ENCODE measurements at regions of chr4 and their contacts with region 1.

Region 1: DNA sequence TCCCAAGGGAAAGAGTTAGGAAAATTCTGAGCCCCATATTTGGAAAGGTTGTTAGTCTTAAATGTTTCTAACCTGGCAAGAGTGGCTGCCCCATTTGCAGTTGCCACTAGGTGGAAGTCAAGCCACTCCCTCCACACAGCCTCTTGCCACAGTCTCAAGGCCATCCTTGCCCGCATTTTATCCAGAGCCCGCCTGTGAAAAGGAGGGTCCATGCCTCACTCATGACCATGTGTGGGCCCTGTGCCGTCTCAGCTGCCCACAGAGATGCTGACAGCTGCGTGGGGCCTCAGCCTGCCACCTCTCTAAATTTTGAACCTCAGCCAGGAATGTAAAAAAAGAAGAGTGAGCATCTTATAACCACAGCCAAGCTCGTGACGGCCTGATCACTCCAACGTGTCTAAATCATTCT is 201.5 kb upstream of the FAM241A start:
- DNase-seq: no peak
- ATAC-seq: peak; percentile 99
- H3K4me3 ChIP-seq: no peak overlapping the region
- H3K27ac ChIP-seq: no peak overlapping the region
- H3K4me1 ChIP-seq: no peaks in the 10 kb centered on the region
- H3K27me3 ChIP-seq: no peaks in the 10 kb centered on the region; a peak in 1 of 4 replicates
- CTCF ChIP-seq: peak; percentile 60 to 83 (median 70)
- EP300 ChIP-seq: no peak
- POLR2A ChIP-seq: no peak
- RAD21 ChIP-seq: peak; percentile 48

Region 2: GRCh38 chr4:111641955-111642579 is 301.7 kb before region 1 on chr4:
- CTCF ChIA-PET with region 1: interaction called, 13 read pairs
- POLR2A ChIA-PET with region 1: no interaction called
- RAD21 ChIA-PET with region 1: no interaction called
- SMC1A ChIA-PET with region 1: interaction called, 6 read pairs
- in situ Hi-C with region 1: loop called (anchors 5 kb)
- intact Hi-C with region 1: no loop called
- DNase-seq: peak; percentile 13
- ATAC-seq: peak; percentile 98
- H3K4me3 ChIP-seq: no peak overlapping the region
- H3K27ac ChIP-seq: no peak overlapping the region
- H3K4me1 ChIP-seq: no peaks in the 10 kb centered on the region
- H3K27me3 ChIP-seq: no peaks in the 10 kb centered on the region; a peak in 1 of 4 replicates
- CTCF ChIP-seq: peak; percentile 80 to 97 (median 83)
- EP300 ChIP-seq: no peak
- POLR2A ChIP-seq: no peak
- RAD21 ChIP-seq: peak; percentile 74

Region 3: GRCh38 chr4:111960241-111960667 is 16.5 kb after region 1 on chr4:
- CTCF ChIA-PET with region 1: interaction called, 69 read pairs
- POLR2A ChIA-PET with region 1: interaction called, 4 read pairs
- RAD21 ChIA-PET with region 1: interaction called, 34 read pairs
- SMC1A ChIA-PET with region 1: interaction called, 90 read pairs
- in situ Hi-C with region 1: no loop called
- intact Hi-C with region 1: no loop called
- DNase-seq: peak; percentile 82
- ATAC-seq: peak; percentile 93
- H3K4me3 ChIP-seq: no peak overlapping the region
- H3K27ac ChIP-seq: no peak overlapping the region
- H3K4me1 ChIP-seq: no peaks in the 10 kb centered on the region
- H3K27me3 ChIP-seq: no peaks in the 10 kb centered on the region
- CTCF ChIP-seq: no peak
- EP300 ChIP-seq: peak; percentile 14 to 89; a peak in 3 of 4 replicates
- POLR2A ChIP-seq: no peak
- RAD21 ChIP-seq: no peak

Region 4: DNA sequence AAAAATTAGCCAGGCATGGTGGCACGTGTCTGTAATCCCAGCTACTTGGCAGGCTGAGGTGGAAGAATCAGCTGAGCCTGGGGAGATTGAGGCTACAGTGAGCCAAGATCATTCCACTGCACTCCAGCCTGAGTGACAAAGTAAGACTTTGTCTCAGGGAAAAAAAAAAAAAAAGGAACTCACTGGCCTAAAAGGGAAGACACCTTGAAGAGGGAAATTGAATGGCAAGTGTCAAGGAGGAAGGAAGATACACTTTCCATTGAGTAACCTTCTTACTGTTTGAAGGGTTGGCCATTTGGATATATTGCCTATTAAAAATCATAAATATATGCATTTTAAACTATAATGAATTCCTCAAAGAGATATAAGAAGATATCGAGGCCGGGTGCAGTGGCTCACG is 54.0 kb after region 1 on chr4:
- CTCF ChIA-PET with region 1: interaction called, 29 read pairs
- POLR2A ChIA-PET with region 1: no interaction called
- RAD21 ChIA-PET with region 1: interaction called, 16 read pairs
- SMC1A ChIA-PET with region 1: interaction called, 40 read pairs
- in situ Hi-C with region 1: no loop called
- intact Hi-C with region 1: no loop called
- DNase-seq: no peak
- ATAC-seq: no peak
- H3K4me3 ChIP-seq: no peak overlapping the region
- H3K27ac ChIP-seq: no peak overlapping the region
- H3K4me1 ChIP-seq: no peaks in the 10 kb centered on the region
- H3K27me3 ChIP-seq: peaks cover 0 to 2% of the 10 kb centered on the region in 2 experiments; a peak in 1 of 4 replicates
- CTCF ChIP-seq: no peak
- EP300 ChIP-seq: no peak
- POLR2A ChIP-seq: no peak
- RAD21 ChIP-seq: no peak

Region 5: DNA sequence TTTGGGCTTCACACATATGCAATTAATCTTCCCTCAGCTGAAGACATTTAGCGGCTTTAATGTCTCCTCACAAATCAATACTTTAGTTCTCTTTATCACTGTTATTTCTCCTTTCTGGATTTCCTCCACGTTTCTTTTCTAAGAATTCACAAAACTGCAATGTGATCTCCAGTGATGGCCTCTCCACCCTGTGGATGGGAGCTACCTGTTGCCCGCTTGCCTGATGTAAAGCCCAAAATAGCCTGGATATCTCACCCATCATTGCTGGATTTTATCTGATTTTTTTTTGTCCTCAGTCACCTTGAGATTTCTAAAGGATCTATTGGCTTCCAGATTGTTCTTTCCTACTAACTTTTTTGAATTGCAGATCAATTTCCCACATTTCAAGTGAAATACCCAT is 72.2 kb after region 1 on chr4:
- CTCF ChIA-PET with region 1: interaction called, 18 read pairs
- POLR2A ChIA-PET with region 1: no interaction called
- RAD21 ChIA-PET with region 1: interaction called, 10 read pairs
- SMC1A ChIA-PET with region 1: interaction called, 24 read pairs
- in situ Hi-C with region 1: no loop called
- intact Hi-C with region 1: no loop called
- DNase-seq: no peak
- ATAC-seq: no peak
- H3K4me3 ChIP-seq: no peak overlapping the region
- H3K27ac ChIP-seq: no peak overlapping the region
- H3K4me1 ChIP-seq: no peaks in the 10 kb centered on the region
- H3K27me3 ChIP-seq: no peaks in the 10 kb centered on the region
- CTCF ChIP-seq: no peak
- EP300 ChIP-seq: no peak
- POLR2A ChIP-seq: no peak
- RAD21 ChIP-seq: no peak

Region 6: GRCh38 chr4:112031712-112032328 is 88.0 kb after region 1 on chr4:
- CTCF ChIA-PET with region 1: interaction called, 392 read pairs
- POLR2A ChIA-PET with region 1: interaction called, 4 read pairs
- RAD21 ChIA-PET with region 1: interaction called, 214 read pairs
- SMC1A ChIA-PET with region 1: interaction called, 289 read pairs
- in situ Hi-C with region 1: loop called (anchors 5 kb)
- intact Hi-C with region 1: loop called (anchors 1 kb)
- DNase-seq: peak; percentile 13
- ATAC-seq: peak; percentile 93
- H3K4me3 ChIP-seq: no peak overlapping the region
- H3K27ac ChIP-seq: no peak overlapping the region
- H3K4me1 ChIP-seq: no peaks in the 10 kb centered on the region
- H3K27me3 ChIP-seq: no peaks in the 10 kb centered on the region
- CTCF ChIP-seq: peak; percentile 53 to 81 (median 62)
- EP300 ChIP-seq: no peak
- POLR2A ChIP-seq: no peak
- RAD21 ChIP-seq: peak; percentile 86

Region 7: DNA sequence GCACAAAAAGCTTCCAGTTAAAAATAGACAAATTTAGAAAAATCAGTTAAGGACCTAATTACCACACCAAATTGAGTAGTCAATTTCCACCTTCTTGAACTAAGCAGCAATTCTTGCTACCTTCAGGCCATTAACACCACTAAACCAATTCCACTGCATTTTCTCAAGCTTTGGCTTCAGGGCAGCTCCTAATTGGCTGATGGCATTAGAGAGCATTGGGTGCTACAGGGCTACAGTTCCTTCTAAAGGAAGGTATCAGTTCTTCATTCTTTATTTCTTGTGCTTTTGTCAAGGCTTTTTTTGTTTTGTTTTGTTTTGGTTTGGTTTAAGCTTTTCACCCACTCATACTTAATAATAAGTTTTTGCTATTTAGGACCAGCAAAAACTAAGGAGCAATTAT is 111.3 kb after region 1 on chr4:
- CTCF ChIA-PET with region 1: interaction called, 37 read pairs
- POLR2A ChIA-PET with region 1: no interaction called
- RAD21 ChIA-PET with region 1: interaction called, 25 read pairs
- SMC1A ChIA-PET with region 1: interaction called, 23 read pairs
- in situ Hi-C with region 1: no loop called
- intact Hi-C with region 1: loop called (anchors 1 kb)
- DNase-seq: no peak
- ATAC-seq: peak; percentile 85
- H3K4me3 ChIP-seq: no peak overlapping the region
- H3K27ac ChIP-seq: no peak overlapping the region
- H3K4me1 ChIP-seq: no peaks in the 10 kb centered on the region
- H3K27me3 ChIP-seq: no peaks in the 10 kb centered on the region
- CTCF ChIP-seq: no peak
- EP300 ChIP-seq: no peak
- POLR2A ChIP-seq: no peak
- RAD21 ChIP-seq: no peak

Region 8: DNA sequence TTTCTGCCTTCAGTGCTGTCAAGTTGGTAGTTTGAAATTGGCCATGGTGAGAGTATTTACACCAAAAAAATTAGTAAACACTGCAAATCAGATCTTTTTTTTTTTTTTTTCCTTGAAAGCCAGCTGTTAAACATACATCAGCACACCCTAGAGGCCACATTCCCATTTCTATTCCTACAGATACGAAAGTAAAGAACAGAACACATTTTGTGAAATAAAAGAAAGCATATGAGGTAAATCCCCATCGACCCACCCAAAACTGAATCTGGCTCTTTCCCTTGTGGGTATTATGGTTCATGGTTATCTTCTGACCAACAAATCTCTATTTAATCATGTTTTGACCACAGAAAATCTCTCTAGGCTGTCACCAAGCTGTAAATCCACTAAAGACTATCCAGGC is 246.0 kb after region 1 on chr4:
- CTCF ChIA-PET with region 1: no interaction called
- POLR2A ChIA-PET with region 1: no interaction called
- RAD21 ChIA-PET with region 1: no interaction called
- SMC1A ChIA-PET with region 1: no interaction called
- in situ Hi-C with region 1: no loop called
- intact Hi-C with region 1: no loop called
- DNase-seq: no peak
- ATAC-seq: no peak
- H3K4me3 ChIP-seq: no peak overlapping the region
- H3K27ac ChIP-seq: no peak overlapping the region
- H3K4me1 ChIP-seq: no peaks in the 10 kb centered on the region
- H3K27me3 ChIP-seq: no peaks in the 10 kb centered on the region
- CTCF ChIP-seq: no peak
- EP300 ChIP-seq: no peak
- POLR2A ChIP-seq: no peak
- RAD21 ChIP-seq: peak; percentile 12; the same call in 1 of the 2 replicates

Measured in GM12878 (cell line).